ENCODE measurements at regions of chr20 and their contacts with region 1.

Region 1: DNA sequence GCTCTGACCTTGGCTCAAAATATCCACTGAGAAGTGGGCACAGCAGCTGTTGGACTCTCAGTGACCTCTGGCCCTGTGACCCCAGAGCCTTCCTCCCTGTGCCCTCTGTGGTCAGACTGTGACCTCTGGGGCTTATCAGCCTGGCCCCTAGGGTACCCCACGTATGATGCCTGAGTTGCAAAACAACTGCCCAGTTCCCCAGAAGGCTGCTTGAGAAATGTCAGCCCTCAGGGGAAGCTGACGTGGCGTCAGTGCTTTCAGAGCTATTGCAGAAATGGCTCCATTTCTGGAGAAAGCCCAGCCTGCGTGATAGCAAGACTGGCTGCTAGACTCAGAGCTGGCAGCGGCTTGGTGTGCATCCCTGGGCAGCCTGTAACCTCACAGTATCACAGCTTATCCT is 31.5 kb upstream of the TGM2 start:
- DNase-seq: no peak
- ATAC-seq: peak in 1 of 2 experiments; percentile 40; a peak in 3 of 6 replicates
- H3K4me3 ChIP-seq: no peak overlapping the region
- H3K27ac ChIP-seq: peak overlapping the region in 1 of 2 experiments; percentile 51; a peak in 3 of 6 replicates
- H3K4me1 ChIP-seq: peaks cover 26% of the 10 kb centered on the region
- CTCF ChIP-seq: no peak
- EP300 ChIP-seq: no peak
- POLR2A ChIP-seq: no peak
- RAD21 ChIP-seq: no peak

Region 2: DNA sequence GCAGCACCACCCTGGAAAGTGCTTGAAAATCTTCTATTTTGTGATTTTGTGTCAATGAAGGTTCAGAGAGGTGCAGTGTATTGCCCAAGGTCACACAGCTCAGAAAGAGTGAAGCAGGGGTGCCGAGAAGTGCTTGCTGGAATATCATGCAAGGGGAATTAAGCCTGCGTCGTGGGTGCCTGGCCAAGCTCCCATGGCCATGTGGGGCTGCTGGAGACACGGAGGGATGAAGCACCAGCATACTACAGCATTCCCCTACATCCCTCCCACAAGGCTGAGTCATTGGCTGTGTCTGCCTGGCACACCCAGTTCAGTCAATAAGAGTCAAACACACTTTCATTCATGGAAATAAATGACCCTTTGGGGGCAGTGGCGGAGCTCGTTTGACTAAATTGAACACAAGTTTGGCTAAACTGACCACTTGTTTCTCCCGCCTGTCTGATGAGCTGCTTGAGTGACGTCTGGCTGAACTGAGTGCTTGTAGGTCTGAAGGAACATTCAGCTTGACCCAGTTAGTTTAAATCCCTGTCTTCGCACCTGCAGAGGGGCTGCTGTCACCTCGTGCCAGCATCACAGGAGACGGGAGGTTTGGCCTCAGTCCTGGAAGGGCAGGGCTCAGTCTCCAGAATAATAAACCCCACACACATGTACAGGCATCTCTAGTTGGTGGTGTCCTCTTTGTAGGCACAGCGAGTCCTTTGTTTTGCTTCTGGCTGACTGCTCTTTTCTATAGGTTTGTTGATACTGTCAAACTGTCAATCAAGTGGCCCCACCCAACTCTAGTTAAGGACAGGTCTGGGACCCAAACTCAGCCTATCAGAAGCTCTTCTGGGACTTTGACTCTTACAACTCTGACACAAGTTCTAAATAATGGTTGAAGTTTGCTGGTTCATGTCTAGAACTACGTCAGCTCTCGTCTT is 23.1 kb before region 1 on chr20:
- CTCF ChIA-PET with region 1: interaction called, 23 read pairs
- POLR2A ChIA-PET with region 1: no interaction called
- DNase-seq: peak; percentile 92 to 95
- ATAC-seq: peak; percentile 85 to 93
- H3K4me3 ChIP-seq: no peak overlapping the region
- H3K27ac ChIP-seq: peak overlapping the region; percentile 91 to 93
- H3K4me1 ChIP-seq: peaks cover 58% of the 10 kb centered on the region
- CTCF ChIP-seq: peak; percentile 45
- EP300 ChIP-seq: peak in 1 of 2 experiments; percentile 51; a peak in 2 of 5 replicates
- POLR2A ChIP-seq: peak; percentile 37; the same call in 1 of the 2 replicates
- RAD21 ChIP-seq: peak; percentile 58 to 75